Right ventricle myocardium superior (tissue), 1 donor: ENCODE measurements at regions of chr5 and their contacts with region 1.

Region 1: DNA sequence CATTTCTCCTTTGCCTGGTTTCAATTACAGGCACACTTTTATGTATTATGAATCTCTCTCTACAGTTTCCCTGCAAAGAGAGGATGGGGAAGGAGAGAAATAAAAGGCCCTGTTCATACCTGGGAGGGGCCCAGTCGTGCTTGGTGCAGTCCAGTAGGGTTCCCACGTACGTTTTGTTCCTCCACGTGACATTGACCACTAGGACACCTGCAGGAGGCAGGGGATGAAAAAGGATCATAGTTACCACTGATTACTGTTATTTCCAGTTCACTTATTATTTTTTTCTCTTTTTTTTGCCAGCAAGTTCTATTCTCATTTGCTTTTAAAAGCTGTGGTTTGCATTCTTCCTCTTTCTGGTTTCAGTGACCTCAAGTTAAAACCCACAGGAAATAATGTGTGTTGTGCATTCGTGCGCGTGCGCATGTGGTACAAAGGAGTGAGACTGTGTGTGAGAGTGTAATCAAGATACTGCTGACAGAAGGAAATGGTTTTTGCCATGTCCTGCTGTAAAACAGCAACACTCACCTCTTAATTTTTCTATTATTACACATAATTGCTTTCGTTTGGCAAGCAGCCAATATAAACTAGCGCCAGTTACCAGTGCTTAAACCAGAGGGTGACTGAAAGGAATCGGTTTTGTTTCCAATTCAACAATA is 96.8 kb downstream of the ZNF608 start:
- DNase-seq: peak; percentile 90
- ATAC-seq: peak; percentile 59

Region 2: DNA sequence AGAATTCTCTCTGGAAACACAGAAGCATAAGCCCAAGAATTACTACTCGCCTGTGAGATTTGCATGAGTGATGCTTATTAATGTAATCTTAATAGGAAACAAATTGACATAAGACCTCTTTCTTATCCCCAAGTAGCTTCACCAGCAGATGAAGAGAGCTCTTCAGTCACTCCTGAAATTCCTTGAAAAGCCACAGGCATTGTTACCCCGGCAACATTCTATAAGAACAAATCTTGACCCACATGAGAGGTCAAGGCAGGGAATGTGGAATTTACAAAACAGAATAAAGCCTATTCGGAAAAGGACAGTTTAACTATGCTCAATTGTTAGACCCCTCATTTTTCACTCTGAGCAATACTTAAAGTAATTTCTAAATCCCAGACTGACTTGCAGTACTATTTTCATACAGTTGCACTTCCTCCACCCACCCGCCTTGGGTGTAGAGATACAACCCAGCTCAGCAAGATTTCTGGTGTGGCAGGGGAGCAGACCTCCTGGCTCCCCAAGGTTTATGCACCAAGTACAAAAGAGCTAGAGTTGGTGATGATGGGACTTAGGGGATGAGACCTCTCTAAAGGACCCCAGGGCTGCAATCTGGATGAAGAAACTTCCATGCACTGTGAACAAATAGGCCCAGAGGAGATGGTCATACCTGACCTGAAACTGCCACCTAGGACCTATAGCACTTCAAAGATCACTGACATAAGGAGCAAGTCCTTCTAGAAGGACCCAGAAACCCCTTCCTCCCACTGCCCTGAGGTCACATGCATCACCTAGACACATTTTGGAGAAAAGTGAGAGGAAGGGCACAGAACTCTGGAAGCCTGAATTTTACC is 145.3 kb before region 1 on chr5:
- intact Hi-C with region 1: no loop called
- DNase-seq: no peak
- ATAC-seq: no peak

Region 3: DNA sequence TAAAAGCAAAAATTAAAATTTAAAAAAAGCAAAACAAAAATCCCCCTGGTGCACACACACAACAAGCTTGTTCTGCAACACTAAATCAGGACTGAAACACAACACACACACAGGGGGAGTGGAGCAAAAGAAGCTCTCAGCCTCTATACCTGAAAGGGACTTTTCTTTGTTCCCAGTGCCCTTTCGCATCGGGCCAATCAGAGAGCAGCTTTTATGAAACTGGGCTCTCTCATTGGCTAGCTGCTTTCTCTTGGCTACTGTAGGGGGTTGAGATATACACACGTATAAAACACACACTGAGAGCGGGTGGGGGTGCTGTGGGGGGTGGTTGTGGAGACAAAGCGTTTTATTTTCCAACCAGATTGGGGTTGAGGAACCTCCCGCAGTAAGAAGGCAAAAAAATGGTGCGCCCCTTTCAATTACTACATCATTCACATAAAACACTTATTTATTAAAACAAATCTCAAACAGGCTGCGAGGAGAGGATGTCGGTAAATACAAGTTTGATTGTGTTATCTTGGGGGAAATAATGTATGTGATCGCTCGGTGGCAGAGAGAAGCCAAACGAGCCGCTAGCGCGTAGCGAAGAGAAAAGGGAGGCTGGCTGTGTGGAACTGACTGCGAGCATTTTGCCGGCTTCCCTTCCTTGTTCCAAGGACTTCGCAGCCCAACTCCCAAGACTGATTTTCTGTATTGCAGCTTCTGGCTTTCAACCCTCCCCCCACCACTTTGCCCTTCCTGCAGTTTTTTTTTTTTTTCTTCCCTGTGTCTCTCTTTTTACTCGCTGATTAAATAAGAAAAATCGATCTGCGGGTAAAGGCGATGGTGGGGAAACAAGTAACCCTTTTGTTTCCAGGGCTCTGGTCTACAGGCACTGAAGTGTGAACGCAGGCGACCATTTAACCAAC is 99.3 kb after region 1 on chr5:
- intact Hi-C with region 1: loop called (anchors 5 kb)
- DNase-seq: peak; percentile 59
- ATAC-seq: peak; percentile 89

Region 4: DNA sequence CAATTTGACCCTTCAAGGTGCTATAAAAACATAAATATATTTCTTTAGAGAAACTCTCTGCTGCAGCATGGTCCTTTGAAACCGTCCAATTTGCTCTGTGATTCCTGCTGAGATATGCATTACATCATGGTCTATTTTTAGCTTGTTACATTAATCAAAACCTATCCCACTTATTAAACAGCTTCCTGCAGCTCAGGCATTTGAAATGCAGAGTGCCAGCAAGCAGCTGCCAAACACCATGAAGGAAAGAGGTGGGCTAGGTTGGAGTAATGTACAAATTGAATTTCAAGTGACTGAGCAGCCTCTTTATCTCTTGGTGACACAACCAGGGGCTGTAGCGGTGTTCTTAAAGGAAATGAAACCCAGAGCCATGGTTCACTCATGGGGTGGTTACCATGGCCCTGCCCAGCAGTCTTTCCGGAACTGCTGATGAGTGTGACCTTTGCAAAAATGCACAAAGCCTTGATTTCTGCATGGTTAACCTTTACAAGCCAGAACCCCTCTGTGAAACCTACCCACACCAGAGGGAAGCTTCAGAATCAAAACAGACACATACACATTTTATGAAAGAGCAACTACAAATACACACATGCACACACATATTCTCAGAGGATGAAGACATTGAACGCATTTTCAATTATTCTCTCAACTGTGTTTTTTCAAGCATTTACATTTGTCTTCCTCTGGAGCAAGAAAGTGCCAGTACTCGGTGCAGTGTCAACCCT is 252.6 kb after region 1 on chr5:
- intact Hi-C with region 1: loop called (anchors 10 kb)
- DNase-seq: no peak
- ATAC-seq: no peak

Region 5: DNA sequence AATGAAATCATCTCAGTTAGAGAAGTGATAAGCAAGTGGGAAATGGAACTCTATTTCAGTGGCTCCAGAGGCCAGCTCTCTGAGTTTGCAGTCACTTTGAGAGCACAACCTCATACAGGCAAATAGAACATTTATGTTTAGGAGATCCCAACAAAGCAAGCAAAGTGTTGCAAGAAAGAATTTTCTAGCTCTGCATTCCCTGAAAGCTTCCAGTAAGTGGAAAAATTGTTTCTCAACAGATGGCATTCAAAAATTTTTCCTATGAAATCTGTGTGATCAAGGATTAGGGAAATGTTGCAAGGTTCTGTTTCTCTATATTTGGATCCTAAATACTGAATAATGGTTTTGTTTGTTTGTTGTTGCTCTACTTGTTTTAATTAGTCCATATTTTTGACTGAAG is 861.0 kb after region 1 on chr5:
- intact Hi-C with region 1: no loop called
- DNase-seq: no peak
- ATAC-seq: no peak